ENCODE measurements at regions of chr5 and their contacts with region 1.

Region 1: GRCh38 chr5:141040771-141041426 is 10.3 kb upstream of the PCDHB1 start:
- DNase-seq: peak; percentile 98
- H3K4me3 Mint-ChIP-seq: no peak overlapping the region
- H3K27ac Mint-ChIP-seq: no peak overlapping the region
- H3K4me1 Mint-ChIP-seq: no peaks in the 10 kb centered on the region
- H3K27me3 Mint-ChIP-seq: no peaks in the 10 kb centered on the region
- CTCF ChIP-seq: peak; percentile 93

Region 2: DNA sequence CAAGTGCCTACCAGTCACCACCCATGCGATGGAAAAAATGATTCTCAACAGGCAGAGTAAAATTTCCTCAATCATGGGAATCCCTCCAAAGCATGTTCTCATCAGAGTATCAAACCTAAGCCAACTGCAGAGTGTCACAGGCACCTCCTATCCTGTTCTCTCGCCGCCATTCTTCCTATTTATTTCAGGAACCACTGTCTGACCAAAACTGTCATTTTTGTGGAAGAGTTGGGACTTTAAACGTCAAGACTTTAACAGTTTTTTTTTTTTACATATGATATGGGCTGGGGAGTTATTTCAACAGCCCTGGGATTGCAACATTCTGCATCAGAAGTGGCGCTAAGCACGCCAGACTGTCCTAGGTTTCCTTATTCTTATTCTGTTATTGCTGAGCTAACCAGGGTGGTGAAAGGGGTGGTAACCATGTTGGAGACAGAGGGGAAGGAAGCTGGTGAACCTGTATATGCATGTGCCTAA is 767.5 kb before region 1 on chr5:
- CTCF ChIA-PET with region 1: no interaction called
- intact Hi-C with region 1: no loop called
- DNase-seq: no peak
- H3K4me3 Mint-ChIP-seq: no peak overlapping the region
- H3K27ac Mint-ChIP-seq: no peak overlapping the region
- H3K4me1 Mint-ChIP-seq: peaks cover 18% of the 10 kb centered on the region
- H3K27me3 Mint-ChIP-seq: no peaks in the 10 kb centered on the region
- CTCF ChIP-seq: no peak

Region 3: GRCh38 chr5:140785905-140786686 is 254.8 kb before region 1 on chr5 and contains the start of gene PCDHA1:
- CTCF ChIA-PET with region 1: interaction called, 15 read pairs
- intact Hi-C with region 1: loop called (anchors 1 kb)
- DNase-seq: peak; percentile 23
- H3K4me3 Mint-ChIP-seq: peak within 1 kb of the TSS; percentile 56
- H3K27ac Mint-ChIP-seq: no peak within 1 kb of the TSS
- H3K4me1 Mint-ChIP-seq: no peaks in the 10 kb centered on the region
- H3K27me3 Mint-ChIP-seq: no peaks in the 10 kb centered on the region
- CTCF ChIP-seq: no peak
- total RNA-seq, gene PCDHA1: 0.73 and 0.83 TPM in 2 replicates

Region 4: DNA sequence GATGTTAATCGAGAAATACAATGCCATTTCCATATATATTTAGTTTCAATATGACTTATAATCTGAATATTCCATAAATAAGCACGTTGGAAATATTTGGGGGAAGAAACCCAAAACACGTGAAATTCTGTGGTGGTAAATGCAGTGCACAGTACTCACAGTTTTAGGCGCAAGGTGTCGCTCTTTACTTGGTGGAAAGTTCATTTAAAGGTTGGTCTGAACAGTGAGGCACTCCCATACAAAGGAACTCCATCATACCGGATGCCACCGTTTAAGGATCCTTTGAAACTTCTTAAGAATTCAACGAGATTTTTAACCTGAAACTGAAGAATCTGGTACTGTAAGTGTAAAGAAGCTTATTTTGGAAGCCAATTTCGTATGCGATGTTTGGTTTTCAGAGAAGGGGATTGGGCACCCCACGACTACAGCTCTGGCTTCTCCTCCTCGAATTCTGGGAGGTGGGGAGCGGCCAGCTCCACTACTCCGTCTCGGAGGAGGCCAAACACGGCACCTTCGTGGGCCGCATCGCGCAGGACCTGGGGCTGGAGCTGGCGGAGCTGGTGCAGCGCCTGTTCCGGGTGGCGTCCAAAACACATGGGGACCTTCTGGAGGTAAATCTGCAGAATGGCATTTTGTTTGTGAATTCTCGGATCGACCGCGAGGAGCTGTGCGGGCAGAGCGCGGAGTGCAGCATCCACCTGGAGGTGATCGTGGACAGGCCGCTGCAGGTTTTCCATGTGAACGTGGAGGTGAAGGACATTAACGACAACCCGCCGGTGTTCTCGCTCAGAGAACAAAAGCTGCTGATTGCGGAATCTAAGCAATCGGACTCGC is 172.0 kb before region 1 on chr5 and contains the start of gene PCDHA11:
- CTCF ChIA-PET with region 1: no interaction called
- intact Hi-C with region 1: loop called (anchors 1 kb)
- DNase-seq: peak; percentile 20
- H3K4me3 Mint-ChIP-seq: no peak within 1 kb of the TSS
- H3K27ac Mint-ChIP-seq: no peak within 1 kb of the TSS
- H3K4me1 Mint-ChIP-seq: no peaks in the 10 kb centered on the region
- H3K27me3 Mint-ChIP-seq: no peaks in the 10 kb centered on the region
- CTCF ChIP-seq: no peak
- total RNA-seq, gene PCDHA11: 0.64 and 1.3 TPM in 2 replicates

Region 5: GRCh38 chr5:140882591-140882899 is 158.4 kb before region 1 on chr5:
- CTCF ChIA-PET with region 1: interaction called, 7 read pairs
- intact Hi-C with region 1: loop called (anchors 1 kb)
- DNase-seq: peak; percentile 46
- H3K4me3 Mint-ChIP-seq: peak overlapping the region; percentile 42
- H3K27ac Mint-ChIP-seq: no peak overlapping the region
- H3K4me1 Mint-ChIP-seq: no peaks in the 10 kb centered on the region
- H3K27me3 Mint-ChIP-seq: no peaks in the 10 kb centered on the region
- CTCF ChIP-seq: no peak

Region 6: GRCh38 chr5:140966293-140967225 is 74.3 kb before region 1 on chr5 and contains the start of gene PCDHAC2:
- CTCF ChIA-PET with region 1: interaction called, 13 read pairs
- intact Hi-C with region 1: loop called (anchors 1 kb)
- DNase-seq: peak; percentile 86
- H3K4me3 Mint-ChIP-seq: peak within 1 kb of the TSS; percentile 99
- H3K27ac Mint-ChIP-seq: peak within 1 kb of the TSS; percentile 97
- H3K4me1 Mint-ChIP-seq: peaks cover 50% of the 10 kb centered on the region
- H3K27me3 Mint-ChIP-seq: no peaks in the 10 kb centered on the region
- CTCF ChIP-seq: no peak
- total RNA-seq, gene PCDHAC2: 12.6 and 17.1 TPM in 2 replicates

Region 7: GRCh38 chr5:141923448-141924352 is 882.8 kb after region 1 on chr5 and contains the start of gene DELE1:
- CTCF ChIA-PET with region 1: no interaction called
- intact Hi-C with region 1: no loop called
- DNase-seq: peak; percentile 95
- H3K4me3 Mint-ChIP-seq: peak within 1 kb of the TSS; percentile 97
- H3K27ac Mint-ChIP-seq: peak within 1 kb of the TSS; percentile 97
- H3K4me1 Mint-ChIP-seq: peaks cover 9% of the 10 kb centered on the region
- H3K27me3 Mint-ChIP-seq: no peaks in the 10 kb centered on the region
- CTCF ChIP-seq: no peak
- total RNA-seq, gene DELE1: 78.0 and 78.5 TPM in 2 replicates

Measured in Calu3 (cell line).